ENCODE measurements at regions of chr1 and their contacts with region 1.

Region 1: DNA sequence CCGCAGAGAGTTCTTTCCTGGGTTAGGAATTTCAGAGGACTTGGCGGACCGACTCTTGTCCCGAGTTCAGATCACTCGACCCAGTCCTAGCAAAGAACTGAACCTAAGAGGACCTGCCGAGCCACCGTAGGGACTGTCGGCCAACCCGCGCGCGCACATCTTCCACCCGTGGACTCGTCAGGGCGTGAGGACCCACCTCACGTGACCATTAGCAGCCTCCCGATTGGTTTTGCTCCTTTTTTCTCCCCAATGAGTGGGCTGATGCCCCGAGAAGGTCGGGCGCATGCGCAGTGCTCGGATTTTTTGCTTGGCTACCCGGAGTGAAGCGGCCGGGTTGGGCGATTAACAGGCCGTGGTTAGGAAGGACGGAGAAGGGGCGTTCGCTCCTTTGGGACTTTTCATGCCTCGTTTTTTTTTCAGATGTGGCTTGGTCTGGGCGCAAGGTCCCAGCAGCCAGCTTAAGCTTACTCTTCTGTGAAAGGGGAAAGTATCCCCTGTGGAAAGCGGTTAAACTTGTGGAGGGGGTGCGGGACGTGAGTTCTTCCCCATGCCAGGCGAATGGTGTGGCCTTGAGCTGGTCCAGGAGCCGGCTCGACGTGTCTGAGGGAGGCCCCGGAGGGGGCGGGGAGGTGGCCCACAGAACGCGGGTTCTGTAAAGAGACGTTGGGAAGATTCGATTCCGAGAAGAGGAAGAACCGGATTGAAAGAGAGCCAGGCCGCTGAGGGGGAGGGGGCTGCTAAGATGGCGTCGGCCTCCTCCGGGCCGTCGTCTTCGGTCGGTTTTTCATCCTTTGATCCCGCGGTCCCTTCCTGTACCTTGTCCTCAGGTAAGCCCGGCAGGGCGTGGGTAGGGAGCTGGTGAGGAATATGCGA is at the start of gene PIP5K1A:
- DNase-seq: peak; percentile 99
- ATAC-seq: peak; percentile 85 to 93
- H3K4me3 ChIP-seq: peak within 1 kb of the TSS; percentile 84 to 97 (median 93)
- H3K27ac ChIP-seq: peak within 1 kb of the TSS; percentile 96 to 99 (median 96)
- H3K4me1 ChIP-seq: peaks cover 32 to 50% of the 10 kb centered on the region in 2 donors
- H3K27me3 ChIP-seq: no peaks in the 10 kb centered on the region
- CTCF ChIP-seq: peak in 1 of 5 experiments; percentile 12
- POLR2A ChIP-seq: peak; percentile 84 to 88
- total RNA-seq, gene PIP5K1A: 23.4 to 46.8 (median 36.9) TPM

Region 2: GRCh38 chr1:151254217-151255213 is 56.0 kb after region 1 on chr1 and contains the start of gene PSMD4:
- in situ Hi-C with region 1: loop called (anchors 5 to 10 kb)
- intact Hi-C with region 1: loop called (anchors 1 kb)
- DNase-seq: peak; percentile 96 to 97
- ATAC-seq: peak; percentile 98 to 99
- H3K4me3 ChIP-seq: peak within 1 kb of the TSS; percentile 81 to 99 (median 89)
- H3K27ac ChIP-seq: peak within 1 kb of the TSS; percentile 90 to 99 (median 97)
- H3K4me1 ChIP-seq: peaks cover 19 to 27% of the 10 kb centered on the region in 2 donors
- H3K27me3 ChIP-seq: no peaks in the 10 kb centered on the region
- CTCF ChIP-seq: no peak
- POLR2A ChIP-seq: peak; percentile 92 to 97
- total RNA-seq, gene PSMD4: 263 to 439 (median 340) TPM

Region 3: DNA sequence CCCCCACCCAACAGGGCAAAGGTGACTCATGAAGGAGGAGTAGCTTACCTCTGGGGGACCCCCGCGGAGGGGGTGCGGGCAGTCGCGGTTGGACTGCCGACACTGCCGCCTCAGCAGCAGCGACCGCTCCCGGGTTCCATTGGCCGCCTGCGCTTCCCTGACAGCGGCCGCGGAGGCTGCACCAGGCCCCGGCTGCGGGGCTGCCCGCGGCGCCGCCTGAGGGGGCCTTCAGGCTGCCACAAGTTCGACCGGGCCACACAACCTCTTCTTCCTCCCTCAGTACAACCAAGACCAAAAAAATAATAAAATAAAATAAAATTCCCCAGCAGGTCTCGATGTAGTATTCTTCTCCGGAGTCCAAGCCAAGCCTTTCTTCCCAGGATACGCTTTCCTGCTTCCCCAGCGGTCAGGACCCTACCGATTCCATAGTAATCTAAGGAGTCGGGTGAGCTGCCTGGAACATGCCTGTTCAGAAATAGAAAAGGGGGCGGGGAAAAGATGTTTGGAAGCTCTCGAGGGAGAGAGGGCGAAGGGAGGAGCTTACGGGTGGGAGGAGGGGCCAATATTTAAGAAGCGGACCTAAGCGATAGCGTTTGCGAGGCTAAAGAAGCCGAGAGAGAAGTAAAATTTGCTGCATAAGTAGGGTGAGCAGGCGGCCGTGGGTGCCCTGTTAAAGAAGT is 128.9 kb after region 1 on chr1 and contains the start of gene PI4KB:
- in situ Hi-C with region 1: no loop called
- intact Hi-C with region 1: loop called (anchors 5 kb)
- DNase-seq: peak; percentile 92 to 95
- ATAC-seq: peak; percentile 98
- H3K4me3 ChIP-seq: peak within 1 kb of the TSS; percentile 71 to 97 (median 78)
- H3K27ac ChIP-seq: peak within 1 kb of the TSS; percentile 92 to 96 (median 94)
- H3K4me1 ChIP-seq: peaks cover 32 to 40% of the 10 kb centered on the region in 2 donors
- H3K27me3 ChIP-seq: no peaks in the 10 kb centered on the region
- CTCF ChIP-seq: peak in 2 of 5 experiments; percentile 16 to 17
- POLR2A ChIP-seq: peak; percentile 70 to 91
- total RNA-seq, gene PI4KB: 65.5 to 98.1 (median 77.3) TPM

Region 4: DNA sequence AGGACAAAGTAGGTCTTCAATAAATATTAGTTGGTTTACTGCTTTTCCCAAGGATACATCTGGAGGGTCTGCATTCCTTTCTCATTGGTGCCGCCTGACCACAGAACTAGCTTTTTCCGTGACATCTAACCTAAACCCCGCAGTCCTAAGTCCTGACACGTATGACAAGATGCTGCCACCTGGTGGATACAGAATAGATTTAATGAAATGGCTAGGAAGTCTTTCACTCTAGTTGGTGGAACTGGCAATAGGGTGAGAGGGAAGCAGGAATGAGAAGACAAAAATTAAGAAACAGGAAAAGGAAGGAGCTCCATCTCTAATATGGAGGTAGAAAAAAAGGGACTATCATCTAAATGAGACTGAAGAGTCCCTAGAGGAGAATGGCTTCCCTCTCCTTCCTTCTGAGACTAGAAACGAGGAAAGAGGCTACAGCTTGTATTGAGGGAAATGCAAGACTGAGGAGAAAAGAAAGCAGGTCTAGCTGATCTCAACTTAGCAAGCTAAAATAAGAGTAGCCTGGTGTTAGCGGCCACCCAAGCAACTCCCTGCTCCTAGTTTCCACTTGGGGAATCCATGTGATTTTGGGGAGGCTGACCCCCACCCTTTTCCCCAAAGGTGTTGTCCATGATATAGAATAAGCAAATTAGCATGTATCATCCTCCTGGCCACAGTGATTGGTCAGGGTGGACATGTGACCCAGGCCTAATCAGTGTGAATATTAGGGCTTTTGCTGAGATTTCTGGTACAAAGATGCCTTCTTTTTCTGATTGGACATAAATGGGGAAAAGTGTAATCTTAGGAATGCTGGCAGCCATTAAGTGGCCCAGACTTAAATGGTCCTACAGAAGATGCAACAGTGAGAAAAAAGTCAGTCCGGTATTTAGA is 142.6 kb after region 1 on chr1:
- in situ Hi-C with region 1: loop called in 1 of 4 experiments (anchors 10 kb)
- intact Hi-C with region 1: loop called (anchors 5 kb)
- DNase-seq: no peak
- ATAC-seq: peak; percentile 85 to 92
- H3K4me3 ChIP-seq: no peak overlapping the region
- H3K27ac ChIP-seq: peak overlapping the region in 3 of 4 donors; percentile 5 to 55 (median 52)
- H3K4me1 ChIP-seq: peaks cover 0 to 3% of the 10 kb centered on the region in 2 donors
- H3K27me3 ChIP-seq: no peaks in the 10 kb centered on the region
- CTCF ChIP-seq: peak; percentile 74 to 84 (median 82)
- POLR2A ChIP-seq: no peak

Region 5: GRCh38 chr1:151346769-151347522 is 148.5 kb after region 1 on chr1 and contains the start of gene RFX5:
- in situ Hi-C with region 1: loop called in 1 of 4 experiments (anchors 10 kb)
- intact Hi-C with region 1: loop called (anchors 5 kb)
- DNase-seq: peak; percentile 93 to 95
- ATAC-seq: peak; percentile 98 to 99
- H3K4me3 ChIP-seq: peak within 1 kb of the TSS; percentile 59 to 81 (median 71)
- H3K27ac ChIP-seq: peak within 1 kb of the TSS; percentile 83 to 89 (median 86)
- H3K4me1 ChIP-seq: peaks cover 0 to 13% of the 10 kb centered on the region in 2 donors
- H3K27me3 ChIP-seq: no peaks in the 10 kb centered on the region
- CTCF ChIP-seq: no peak
- POLR2A ChIP-seq: peak; percentile 50 to 64
- total RNA-seq, gene RFX5: 11.4 to 24.0 (median 20.6) TPM

Measured in gastrocnemius medialis (tissue), 4 donors.